Endothelial cell of umbilical vein (primary cell): ENCODE measurements at regions of chr4 and their contacts with region 1.

Region 1: GRCh38 chr4:109294006-109294405 is 8.5 kb downstream of the COL25A1 start:
- DNase-seq: no peak
- H3K4me3 ChIP-seq: no peak overlapping the region
- H3K27ac ChIP-seq: no peak overlapping the region
- H3K4me1 ChIP-seq: peaks cover 9% of the 10 kb centered on the region
- H3K27me3 ChIP-seq: no peaks in the 10 kb centered on the region
- CTCF ChIP-seq: peak in 1 of 2 donors; percentile 9
- POLR2A ChIP-seq: no peak

Region 2: GRCh38 chr4:108690738-108691137 is 603.3 kb before region 1 on chr4:
- CTCF ChIA-PET with region 1: no interaction called
- POLR2A ChIA-PET with region 1: no interaction called
- dilution Hi-C with region 1: no loop called
- intact Hi-C with region 1: no loop called
- DNase-seq: no peak
- H3K4me3 ChIP-seq: no peak overlapping the region
- H3K27ac ChIP-seq: no peak overlapping the region
- H3K4me1 ChIP-seq: no peaks in the 10 kb centered on the region
- H3K27me3 ChIP-seq: peaks cover 0 to 2% of the 10 kb centered on the region in 2 experiments
- CTCF ChIP-seq: no peak
- POLR2A ChIP-seq: no peak

Region 3: GRCh38 chr4:109184491-109184961 is 109.5 kb before region 1 on chr4:
- CTCF ChIA-PET with region 1: interaction called, 6 read pairs
- POLR2A ChIA-PET with region 1: no interaction called
- dilution Hi-C with region 1: no loop called
- intact Hi-C with region 1: loop called (anchors 10 kb)
- DNase-seq: peak; percentile 78
- H3K4me3 ChIP-seq: no peak overlapping the region
- H3K27ac ChIP-seq: peak overlapping the region; percentile 2
- H3K4me1 ChIP-seq: peaks cover 21% of the 10 kb centered on the region
- H3K27me3 ChIP-seq: no peaks in the 10 kb centered on the region
- CTCF ChIP-seq: no peak
- POLR2A ChIP-seq: no peak

Region 4: GRCh38 chr4:109325698-109326097 is 31.7 kb after region 1 on chr4:
- CTCF ChIA-PET with region 1: no interaction called
- POLR2A ChIA-PET with region 1: no interaction called
- dilution Hi-C with region 1: no loop called
- intact Hi-C with region 1: no loop called
- DNase-seq: no peak
- H3K4me3 ChIP-seq: no peak overlapping the region
- H3K27ac ChIP-seq: no peak overlapping the region
- H3K4me1 ChIP-seq: no peaks in the 10 kb centered on the region
- H3K27me3 ChIP-seq: no peaks in the 10 kb centered on the region
- CTCF ChIP-seq: no peak
- POLR2A ChIP-seq: no peak

Region 5: GRCh38 chr4:109676886-109677285 is 382.9 kb after region 1 on chr4:
- CTCF ChIA-PET with region 1: no interaction called
- POLR2A ChIA-PET with region 1: no interaction called
- dilution Hi-C with region 1: no loop called
- intact Hi-C with region 1: no loop called
- DNase-seq: no peak
- H3K4me3 ChIP-seq: no peak overlapping the region
- H3K27ac ChIP-seq: no peak overlapping the region
- H3K4me1 ChIP-seq: no peaks in the 10 kb centered on the region
- H3K27me3 ChIP-seq: no peaks in the 10 kb centered on the region
- CTCF ChIP-seq: no peak
- POLR2A ChIP-seq: no peak